Colonic mucosa (tissue), 4 donors: ENCODE measurements at regions of chr5 and their contacts with region 1.

Region 1: DNA sequence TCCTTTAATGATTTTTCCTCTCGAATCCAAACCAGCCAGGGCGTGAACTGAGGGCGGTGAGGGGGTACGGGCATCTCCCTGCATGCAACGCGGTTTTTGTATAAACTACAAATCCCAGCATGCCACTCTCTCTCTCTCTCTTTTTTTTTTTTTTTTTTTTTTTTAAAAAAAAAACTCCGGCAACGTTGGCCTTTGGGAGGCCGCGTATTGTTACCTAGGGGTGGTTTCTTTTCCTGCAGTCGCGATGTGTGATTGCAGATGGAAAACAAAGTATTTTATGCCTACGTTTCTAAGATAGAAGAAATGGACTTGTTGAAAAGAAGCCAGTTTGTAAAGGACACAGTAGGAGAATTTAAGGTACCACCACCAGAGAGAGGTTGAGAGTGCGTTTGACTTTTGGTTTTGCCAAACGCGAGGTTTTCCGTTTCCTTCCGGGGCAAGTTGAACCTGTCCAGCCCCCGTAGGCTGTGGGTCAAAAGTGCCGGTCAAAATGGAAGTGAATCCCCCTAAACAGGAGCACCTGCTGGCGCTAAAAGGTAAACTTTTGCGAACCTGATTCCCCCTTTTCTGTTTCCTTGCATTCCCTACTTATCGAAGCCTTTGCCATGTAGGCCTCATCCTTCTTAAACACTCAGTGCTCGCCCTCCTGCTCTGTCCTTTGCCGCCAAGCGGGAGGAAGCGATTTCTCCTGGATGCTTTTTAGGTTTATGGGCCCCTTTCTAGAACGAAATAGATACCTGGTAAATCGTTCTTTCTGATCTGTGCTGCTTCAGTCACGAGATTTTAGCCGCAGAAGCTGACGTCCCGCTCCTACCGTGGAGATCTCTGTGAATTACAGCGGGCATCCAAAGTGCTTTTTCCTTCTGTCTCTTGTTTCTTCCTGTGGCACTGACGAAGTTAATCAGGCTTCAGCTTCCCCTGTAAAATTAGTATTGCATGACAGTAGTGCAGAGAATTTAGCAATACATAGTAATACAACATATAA is at the starts of genes SHLD3 and TRAPPC13:
- DNase-seq: peak; percentile 92
- H3K4me3 ChIP-seq: peak within 1 kb of the TSS; percentile 75
- H3K27ac ChIP-seq: peak within 1 kb of the TSS; percentile 81
- H3K4me1 ChIP-seq: peaks cover 18% of the 10 kb centered on the region
- H3K27me3 ChIP-seq: no peaks in the 10 kb centered on the region
- CTCF ChIP-seq: no peak
- total RNA-seq, gene SHLD3: 3.1 to 3.9 TPM
- total RNA-seq, gene TRAPPC13: 20.1 to 23.6 TPM

Region 2: GRCh38 chr5:65562731-65563701 is 61.8 kb before region 1 on chr5 and contains the starts of genes CENPK and PPWD1:
- intact Hi-C with region 1: loop called (anchors 10 kb)
- DNase-seq: peak; percentile 96
- H3K4me3 ChIP-seq: peak within 1 kb of the TSS; percentile 82
- H3K27ac ChIP-seq: peak within 1 kb of the TSS; percentile 91
- H3K4me1 ChIP-seq: peaks cover 11% of the 10 kb centered on the region
- H3K27me3 ChIP-seq: no peaks in the 10 kb centered on the region
- CTCF ChIP-seq: no peak
- total RNA-seq, gene CENPK: 10.4 to 31.4 TPM
- total RNA-seq, gene PPWD1: 23.5 to 28.2 TPM

Region 3: GRCh38 chr5:65577141-65577540 is 47.7 kb before region 1 on chr5:
- intact Hi-C with region 1: no loop called
- DNase-seq: no peak
- H3K4me3 ChIP-seq: no peak overlapping the region
- H3K27ac ChIP-seq: no peak overlapping the region
- H3K4me1 ChIP-seq: no peaks in the 10 kb centered on the region
- H3K27me3 ChIP-seq: no peaks in the 10 kb centered on the region
- CTCF ChIP-seq: no peak